ENCODE measurements at regions of chr10 and their contacts with region 1.

Region 1: DNA sequence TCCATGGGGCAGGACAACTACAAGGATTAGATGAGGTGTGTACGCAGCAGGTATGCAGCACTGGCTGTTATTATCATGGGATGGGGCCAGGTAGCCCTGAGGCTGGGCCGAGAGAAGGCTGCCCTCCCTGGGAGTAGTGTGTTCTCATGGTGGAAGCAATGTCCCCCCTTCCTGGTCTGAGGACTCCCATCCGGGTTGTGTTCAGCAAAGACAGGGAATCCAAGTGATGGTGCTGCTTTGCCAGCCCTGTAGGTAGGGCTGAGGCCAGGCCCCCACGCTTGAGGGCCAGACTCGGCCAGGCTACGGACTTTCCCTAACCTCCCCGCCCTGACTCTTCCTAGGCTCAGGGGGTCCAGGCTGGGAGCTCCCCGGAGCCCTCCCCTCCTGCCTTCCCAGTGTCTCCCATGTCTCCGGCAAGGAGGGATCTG is 19.9 kb upstream of the SFRP5 start:
- DNase-seq: no peak
- H3K4me3 ChIP-seq: no peak overlapping the region
- H3K27ac ChIP-seq: no peak overlapping the region
- H3K4me1 ChIP-seq: peaks cover 0 to 20% (median 2%) of the 10 kb centered on the region in 6 donors
- H3K27me3 ChIP-seq: peaks cover 0 to 49% (median 3%) of the 10 kb centered on the region in 7 donors
- CTCF ChIP-seq: peak in 4 of 11 experiments; percentile 67 to 91 (median 81)
- POLR2A ChIP-seq: no peak

Region 2: DNA sequence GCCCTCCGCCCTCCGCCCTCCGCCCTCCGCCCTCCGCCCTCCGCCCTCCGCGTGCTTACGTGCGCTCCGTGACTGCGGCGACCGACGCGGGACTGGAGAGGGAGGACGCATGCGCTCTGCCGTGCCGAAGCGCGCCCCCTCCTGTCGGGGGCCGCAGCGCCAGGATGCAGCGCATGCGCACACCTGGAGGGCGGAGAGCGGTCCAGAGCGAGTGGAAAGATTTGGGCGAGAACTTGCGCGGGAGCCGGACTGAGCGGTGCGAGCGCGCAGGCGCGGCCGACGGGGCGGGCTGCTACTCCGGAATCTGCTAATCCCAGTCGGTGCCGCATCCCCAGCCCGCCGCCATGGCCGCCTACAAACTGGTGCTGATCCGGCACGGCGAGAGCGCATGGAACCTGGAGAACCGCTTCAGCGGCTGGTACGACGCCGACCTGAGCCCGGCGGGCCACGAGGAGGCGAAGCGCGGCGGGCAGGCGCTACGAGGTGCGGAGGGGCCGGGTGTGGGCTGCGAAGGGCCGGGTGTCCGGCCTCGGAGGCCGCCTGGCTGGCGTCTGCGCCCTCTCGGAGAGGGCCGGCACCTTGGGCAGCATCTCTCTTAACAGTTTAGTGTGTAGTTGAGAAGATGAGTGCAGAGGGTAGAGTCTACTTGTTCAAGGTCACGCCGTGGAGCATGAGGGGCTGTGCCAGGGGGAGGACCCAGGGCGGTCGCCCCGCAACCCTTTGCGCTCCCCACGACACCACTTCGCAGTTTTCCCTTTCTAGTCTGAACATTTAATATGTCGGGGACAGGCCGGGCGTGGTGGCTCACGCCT is 365.6 kb before region 1 on chr10 and contains the start of gene PGAM1:
- intact Hi-C with region 1: no loop called
- DNase-seq: peak; percentile 99
- H3K4me3 ChIP-seq: peak within 1 kb of the TSS; percentile 60 to 99 (median 86)
- H3K27ac ChIP-seq: peak within 1 kb of the TSS; percentile 79 to 95 (median 94)
- H3K4me1 ChIP-seq: peaks cover 23 to 83% (median 48%) of the 10 kb centered on the region in 6 donors
- H3K27me3 ChIP-seq: no peaks in the 10 kb centered on the region
- CTCF ChIP-seq: peak; percentile 47 to 88 (median 72)
- POLR2A ChIP-seq: peak in 1 of 3 donors; percentile 60
- total RNA-seq, gene PGAM1: 144 to 235 (median 197) TPM

Region 3: DNA sequence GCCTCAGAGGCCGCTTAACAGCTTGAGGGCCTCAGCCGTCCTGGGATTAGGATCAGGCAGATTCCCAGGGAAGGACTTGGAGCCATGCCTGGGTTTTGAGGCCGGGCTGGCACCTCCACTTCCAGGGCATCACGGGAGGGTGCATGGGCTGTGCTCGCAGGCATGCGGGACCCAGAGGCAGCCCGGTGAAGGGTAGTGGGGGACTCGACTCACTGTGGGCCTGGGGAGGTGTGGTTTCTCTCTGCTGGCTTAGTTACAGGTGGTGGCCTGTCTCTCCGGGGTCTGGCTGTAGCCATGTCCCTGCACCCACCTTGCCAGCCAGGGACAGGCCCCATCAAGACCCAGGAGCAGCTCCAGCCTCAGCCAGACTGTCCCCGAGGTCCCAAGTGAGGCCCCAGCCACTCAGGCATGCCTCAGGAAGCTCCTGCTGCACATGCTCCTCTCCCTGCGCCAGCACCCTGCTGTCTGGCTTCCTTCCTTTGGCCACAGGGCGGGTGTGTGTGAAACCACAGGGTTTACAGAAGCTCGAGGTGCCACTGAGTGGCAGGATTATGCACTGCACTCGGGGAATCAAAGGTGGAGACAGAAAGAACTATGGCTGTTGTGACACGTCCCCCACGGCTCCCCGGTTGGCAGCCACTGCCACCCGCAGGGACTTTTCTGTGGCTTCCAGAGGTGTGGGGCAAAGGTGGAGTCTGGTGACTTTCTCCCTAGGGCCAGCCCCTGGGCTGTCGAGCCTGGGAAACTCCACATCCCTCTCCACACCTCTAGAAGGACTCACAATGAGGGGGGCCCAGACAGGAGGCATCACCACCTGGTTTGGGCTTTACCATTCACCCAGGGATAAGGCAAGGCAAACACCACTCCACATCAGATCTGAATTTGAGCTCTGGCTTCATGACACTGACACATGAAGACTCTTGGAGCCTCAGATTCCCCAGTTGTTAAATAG is 77.6 kb after region 1 on chr10:
- intact Hi-C with region 1: loop called (anchors 2 kb)
- DNase-seq: peak; percentile 90
- H3K4me3 ChIP-seq: peak overlapping the region in 1 of 8 donors; percentile 30
- H3K27ac ChIP-seq: peak overlapping the region in 1 of 8 donors; percentile 9
- H3K4me1 ChIP-seq: peaks cover 8 to 16% (median 11%) of the 10 kb centered on the region in 6 donors
- H3K27me3 ChIP-seq: peaks cover 0 to 58% (median 0%) of the 10 kb centered on the region in 7 donors
- CTCF ChIP-seq: peak; percentile 58 to 94 (median 81)
- POLR2A ChIP-seq: no peak

Measured in spleen (tissue), 13 donors.